CD4-positive, alpha-beta T cell (primary cell): ENCODE measurements at regions of chr2 and their contacts with region 1.

Region 1: GRCh38 chr2:168136392-168136977 is 110.9 kb downstream of the STK39 start:
- DNase-seq: peak in 3 of 14 experiments; percentile 57 to 59 (median 58)
- ATAC-seq: peak; percentile 57
- H3K4me3 ChIP-seq: no peak overlapping the region
- H3K4me3 Mint-ChIP-seq: no peak overlapping the region
- H3K27ac ChIP-seq: no peak overlapping the region
- H3K27ac Mint-ChIP-seq: no peak overlapping the region
- H3K4me1 ChIP-seq: no peaks in the 10 kb centered on the region
- H3K4me1 Mint-ChIP-seq: peaks cover 5% of the 10 kb centered on the region
- H3K27me3 ChIP-seq: no peaks in the 10 kb centered on the region
- H3K27me3 Mint-ChIP-seq: no peaks in the 10 kb centered on the region
- CTCF ChIP-seq: peak; percentile 82

Region 2: GRCh38 chr2:167733747-167734146 is 402.7 kb before region 1 on chr2:
- CTCF ChIA-PET with region 1: no interaction called
- POLR2A ChIA-PET with region 1: no interaction called
- intact Hi-C with region 1: no loop called
- DNase-seq: no peak
- ATAC-seq: no peak
- H3K4me3 ChIP-seq: no peak overlapping the region
- H3K4me3 Mint-ChIP-seq: no peak overlapping the region
- H3K27ac ChIP-seq: no peak overlapping the region
- H3K27ac Mint-ChIP-seq: no peak overlapping the region
- H3K4me1 ChIP-seq: no peaks in the 10 kb centered on the region
- H3K4me1 Mint-ChIP-seq: no peaks in the 10 kb centered on the region
- H3K27me3 ChIP-seq: no peaks in the 10 kb centered on the region
- H3K27me3 Mint-ChIP-seq: no peaks in the 10 kb centered on the region
- CTCF ChIP-seq: no peak

Region 3: GRCh38 chr2:168030862-168031624 is 105.4 kb before region 1 on chr2:
- CTCF ChIA-PET with region 1: no interaction called
- POLR2A ChIA-PET with region 1: no interaction called
- intact Hi-C with region 1: no loop called
- DNase-seq: no peak
- ATAC-seq: no peak
- H3K4me3 ChIP-seq: no peak overlapping the region
- H3K4me3 Mint-ChIP-seq: no peak overlapping the region
- H3K27ac ChIP-seq: no peak overlapping the region
- H3K27ac Mint-ChIP-seq: no peak overlapping the region
- H3K4me1 ChIP-seq: no peaks in the 10 kb centered on the region
- H3K4me1 Mint-ChIP-seq: no peaks in the 10 kb centered on the region
- H3K27me3 ChIP-seq: no peaks in the 10 kb centered on the region
- H3K27me3 Mint-ChIP-seq: no peaks in the 10 kb centered on the region
- CTCF ChIP-seq: no peak

Region 4: GRCh38 chr2:168246483-168247340 is 110.2 kb after region 1 on chr2:
- CTCF ChIA-PET with region 1: interaction called, 3 read pairs
- POLR2A ChIA-PET with region 1: no interaction called
- intact Hi-C with region 1: loop called in 1 of 2 experiments (anchors 10 kb)
- DNase-seq: peak; percentile 60 to 93 (median 78)
- ATAC-seq: peak; percentile 71
- H3K4me3 ChIP-seq: peak overlapping the region; percentile 73
- H3K4me3 Mint-ChIP-seq: peak overlapping the region; percentile 94
- H3K27ac ChIP-seq: peak overlapping the region; percentile 11 to 78
- H3K27ac Mint-ChIP-seq: peak overlapping the region; percentile 88
- H3K4me1 ChIP-seq: peaks cover 35% of the 10 kb centered on the region
- H3K4me1 Mint-ChIP-seq: peaks cover 41% of the 10 kb centered on the region
- H3K27me3 ChIP-seq: no peaks in the 10 kb centered on the region
- H3K27me3 Mint-ChIP-seq: no peaks in the 10 kb centered on the region
- CTCF ChIP-seq: no peak

Region 5: GRCh38 chr2:168687314-168687713 is 550.8 kb after region 1 on chr2:
- CTCF ChIA-PET with region 1: no interaction called
- POLR2A ChIA-PET with region 1: no interaction called
- intact Hi-C with region 1: loop called (anchors 5 to 10 kb)
- DNase-seq: peak in 6 of 14 experiments; percentile 7 to 37 (median 27)
- ATAC-seq: peak; percentile 51
- H3K4me3 ChIP-seq: no peak overlapping the region
- H3K4me3 Mint-ChIP-seq: no peak overlapping the region
- H3K27ac ChIP-seq: no peak overlapping the region
- H3K27ac Mint-ChIP-seq: no peak overlapping the region
- H3K4me1 ChIP-seq: no peaks in the 10 kb centered on the region
- H3K4me1 Mint-ChIP-seq: peaks cover 4% of the 10 kb centered on the region
- H3K27me3 ChIP-seq: no peaks in the 10 kb centered on the region
- H3K27me3 Mint-ChIP-seq: no peaks in the 10 kb centered on the region
- CTCF ChIP-seq: no peak

Region 6: GRCh38 chr2:168705534-168706470 is 569.3 kb after region 1 on chr2:
- CTCF ChIA-PET with region 1: no interaction called
- POLR2A ChIA-PET with region 1: no interaction called
- intact Hi-C with region 1: loop called in 1 of 2 experiments (anchors 5 kb)
- DNase-seq: peak in 3 of 14 experiments; percentile 17 to 29 (median 21)
- ATAC-seq: no peak
- H3K4me3 ChIP-seq: no peak overlapping the region
- H3K4me3 Mint-ChIP-seq: no peak overlapping the region
- H3K27ac ChIP-seq: no peak overlapping the region
- H3K27ac Mint-ChIP-seq: no peak overlapping the region
- H3K4me1 ChIP-seq: no peaks in the 10 kb centered on the region
- H3K4me1 Mint-ChIP-seq: peaks cover 4% of the 10 kb centered on the region
- H3K27me3 ChIP-seq: no peaks in the 10 kb centered on the region
- H3K27me3 Mint-ChIP-seq: no peaks in the 10 kb centered on the region
- CTCF ChIP-seq: no peak

Region 7: GRCh38 chr2:168920504-168921157 is 784.1 kb after region 1 on chr2:
- CTCF ChIA-PET with region 1: no interaction called
- POLR2A ChIA-PET with region 1: no interaction called
- intact Hi-C with region 1: loop called (anchors 5 kb)
- DNase-seq: peak in 3 of 14 experiments; percentile 52 to 65 (median 62)
- ATAC-seq: no peak
- H3K4me3 ChIP-seq: no peak overlapping the region
- H3K4me3 Mint-ChIP-seq: no peak overlapping the region
- H3K27ac ChIP-seq: no peak overlapping the region
- H3K27ac Mint-ChIP-seq: no peak overlapping the region
- H3K4me1 ChIP-seq: peaks cover 2% of the 10 kb centered on the region
- H3K4me1 Mint-ChIP-seq: no peaks in the 10 kb centered on the region
- H3K27me3 ChIP-seq: peaks cover 0 to 6% of the 10 kb centered on the region in 2 experiments
- H3K27me3 Mint-ChIP-seq: peaks cover 29% of the 10 kb centered on the region
- CTCF ChIP-seq: peak; percentile 77